Adrenal gland (tissue), 19 donors: ENCODE measurements at regions of chr9 and their contacts with region 1.

Region 1: DNA sequence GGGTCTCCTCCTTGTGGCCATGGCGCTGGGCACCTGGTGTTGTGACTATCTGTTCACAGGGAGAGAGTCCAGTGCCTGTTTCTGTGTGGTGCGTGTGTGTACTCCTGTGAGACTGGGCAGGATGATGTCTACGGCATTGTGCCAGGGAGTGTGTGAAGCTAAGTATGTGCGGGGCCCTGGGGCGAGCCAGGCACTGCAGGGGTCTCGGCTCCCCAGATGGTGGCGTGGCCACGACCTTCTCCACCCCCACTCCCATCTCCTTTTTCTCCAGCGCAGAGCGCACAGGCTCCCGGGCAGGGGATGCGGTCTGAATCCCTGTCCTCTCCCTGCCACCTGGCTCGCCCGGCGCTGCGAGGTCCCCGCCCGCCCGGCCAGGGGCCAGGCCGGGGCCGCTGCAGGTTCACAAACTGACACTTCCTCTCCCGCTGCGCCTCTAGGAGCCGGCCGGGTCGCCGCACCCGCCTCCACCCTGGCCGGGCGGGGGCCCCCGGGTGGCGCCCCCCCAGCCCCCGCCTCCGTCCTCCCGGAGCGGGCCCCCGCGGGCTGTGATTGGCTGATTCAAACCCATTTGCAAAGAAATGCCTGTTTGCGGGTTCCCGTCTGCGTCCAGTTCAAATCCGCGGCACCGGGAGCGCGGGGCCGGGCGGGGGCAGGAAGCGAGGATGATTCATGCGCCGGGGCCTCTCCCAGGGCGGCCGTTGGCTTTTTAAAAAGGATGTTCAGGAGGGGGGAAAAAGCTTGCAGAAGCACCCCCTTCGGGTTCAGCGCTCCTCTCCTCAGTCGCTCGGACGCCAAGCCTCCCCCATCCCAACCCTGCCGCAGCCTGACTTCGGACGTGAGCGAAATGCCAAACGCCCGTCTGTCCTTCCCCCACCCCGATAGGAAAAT is 790 bp downstream of the PHF19 start:
- DNase-seq: peak; percentile 82 to 93 (median 84)
- H3K4me3 ChIP-seq: peak overlapping the region in 3 of 4 donors; percentile 73 to 76 (median 75)
- H3K27ac ChIP-seq: peak overlapping the region; percentile 54 to 96 (median 90)
- H3K4me1 ChIP-seq: peaks cover 0 to 15% of the 10 kb centered on the region in 2 donors
- H3K27me3 ChIP-seq: no peaks in the 10 kb centered on the region
- CTCF ChIP-seq: peak in 1 of 6 experiments; percentile 1
- POLR2A ChIP-seq: peak; percentile 12 to 42

Region 2: DNA sequence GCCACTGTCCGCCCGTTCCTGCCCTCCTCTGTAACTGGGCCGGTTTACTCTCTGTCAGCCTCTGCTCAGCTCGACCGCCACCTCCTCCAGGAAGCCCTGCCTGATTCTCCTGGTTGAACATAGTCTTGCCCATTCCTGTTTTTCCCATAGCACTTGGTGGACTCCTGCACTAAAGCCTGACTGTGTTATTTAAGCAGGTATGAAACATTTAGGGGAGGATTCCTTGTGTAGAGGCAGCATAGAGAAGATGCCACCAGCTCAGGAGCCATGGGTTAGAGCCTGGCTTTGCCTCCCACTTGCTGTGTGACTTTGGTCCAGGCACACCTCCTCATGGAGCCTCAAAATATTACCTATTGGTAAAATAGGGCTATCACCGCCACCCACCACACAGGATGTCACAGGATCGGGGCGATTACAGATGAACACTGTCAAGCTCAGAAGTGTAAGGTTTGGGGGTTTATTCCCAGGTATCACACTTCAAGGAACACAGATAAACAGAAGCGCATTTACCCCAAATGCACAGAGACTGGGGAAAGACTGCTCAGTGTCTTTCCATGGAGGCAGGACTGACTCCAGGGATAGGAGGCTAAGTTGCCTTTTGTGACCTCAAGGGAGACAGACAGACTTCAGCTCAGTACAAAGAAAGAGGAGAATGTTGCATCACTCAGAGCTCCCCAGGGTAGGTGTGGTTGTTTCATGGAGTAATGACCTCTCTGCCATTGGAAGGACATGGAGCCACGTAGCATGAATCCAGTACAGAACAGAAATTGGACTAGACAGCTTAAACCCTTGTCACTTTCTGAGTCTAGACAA is 43.6 kb after region 1 on chr9:
- intact Hi-C with region 1: loop called in 1 of 2 experiments (anchors 5 kb)
- DNase-seq: peak in 1 of 7 donors; percentile 46
- H3K4me3 ChIP-seq: no peak overlapping the region
- H3K27ac ChIP-seq: peak overlapping the region; percentile 52 to 79 (median 66)
- H3K4me1 ChIP-seq: peaks cover 4 to 60% of the 10 kb centered on the region in 2 donors
- H3K27me3 ChIP-seq: no peaks in the 10 kb centered on the region
- CTCF ChIP-seq: no peak
- POLR2A ChIP-seq: no peak

Region 3: GRCh38 chr9:120936011-120936763 is 60.0 kb after region 1 on chr9:
- intact Hi-C with region 1: loop called in 1 of 2 experiments (anchors 5 kb)
- DNase-seq: peak; percentile 94 to 98 (median 97)
- H3K4me3 ChIP-seq: no peak overlapping the region
- H3K27ac ChIP-seq: peak overlapping the region; percentile 25 to 94 (median 73)
- H3K4me1 ChIP-seq: peaks cover 30 to 61% of the 10 kb centered on the region in 2 donors
- H3K27me3 ChIP-seq: no peaks in the 10 kb centered on the region
- CTCF ChIP-seq: peak; percentile 87 to 94 (median 93)
- POLR2A ChIP-seq: no peak